H1 (cell line): ENCODE measurements at regions of chr13 and their contacts with region 1.

Region 1: DNA sequence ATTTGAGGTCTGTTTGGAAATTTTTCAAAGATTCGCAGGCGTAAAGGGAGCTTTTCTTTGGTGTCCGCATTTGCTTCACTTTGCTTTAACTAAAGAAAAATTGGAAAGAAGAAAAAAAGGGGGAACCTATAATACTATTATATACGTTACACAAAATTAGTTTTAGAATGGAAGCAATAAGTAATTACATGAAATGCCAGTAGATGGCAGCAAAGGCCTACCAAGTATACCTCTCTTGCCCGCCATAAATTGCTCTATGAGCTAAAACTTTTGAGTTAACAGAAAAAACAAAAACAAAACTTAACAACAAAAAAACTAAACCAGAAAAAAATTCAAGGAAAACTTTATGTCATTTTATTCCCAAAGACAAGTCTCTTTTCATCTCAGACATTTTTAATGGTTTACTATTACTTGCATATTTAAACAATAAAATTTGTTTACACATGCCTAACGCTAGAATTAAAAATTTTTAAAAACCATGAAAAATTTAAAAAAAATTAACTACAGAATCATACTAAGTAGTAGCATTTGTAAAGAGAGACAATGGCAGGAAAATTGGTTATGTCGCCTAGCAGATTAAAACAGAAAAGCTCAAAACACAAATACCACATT is 271.4 kb downstream of the NALCN start:
- DNase-seq: no peak
- H3K4me3 ChIP-seq: no peak overlapping the region
- H3K27ac ChIP-seq: no peak overlapping the region
- H3K4me1 ChIP-seq: peaks cover 0 to 3% (median 0%) of the 10 kb centered on the region in 4 experiments; a peak in 1 of 7 replicates
- H3K27me3 ChIP-seq: no peaks in the 10 kb centered on the region
- CTCF ChIP-seq: peak in 2 of 3 experiments; percentile 31 to 48; a peak in 2 of 4 replicates
- EP300 ChIP-seq: no peak
- POLR2A ChIP-seq: no peak
- RAD21 ChIP-seq: peak; percentile 82 to 84

Region 2: DNA sequence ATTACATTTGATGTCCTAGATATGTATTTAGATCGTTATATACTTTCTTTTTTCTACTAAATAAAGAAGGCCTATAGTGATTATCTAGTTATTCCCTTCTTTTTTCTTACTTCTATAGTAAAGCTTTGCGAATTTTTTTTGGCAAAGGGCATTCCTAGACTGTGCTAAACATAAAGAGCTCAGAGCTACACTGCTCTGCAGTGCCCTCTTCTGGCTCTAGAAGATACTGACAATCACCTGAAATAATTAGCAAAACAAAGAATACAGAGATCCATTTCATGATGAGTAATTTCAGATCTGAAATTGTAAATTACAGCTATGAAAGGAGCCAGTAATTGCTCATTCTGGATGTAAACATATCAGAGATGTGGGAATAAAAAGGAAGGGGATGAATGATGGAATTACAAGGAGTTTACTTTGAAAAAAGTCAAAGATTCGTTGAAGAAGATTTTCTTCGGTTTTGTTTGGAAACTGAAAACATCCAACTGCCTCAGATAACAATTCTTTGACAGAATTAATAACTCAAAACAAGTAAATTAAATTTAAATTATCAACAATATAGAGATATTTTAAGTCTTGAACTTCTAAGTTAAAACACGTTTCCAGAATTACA is 17.1 kb before region 1 on chr13:
- CTCF ChIA-PET with region 1: interaction called, 14 read pairs
- POLR2A ChIA-PET with region 1: no interaction called
- DNase-seq: no peak
- H3K4me3 ChIP-seq: no peak overlapping the region
- H3K27ac ChIP-seq: no peak overlapping the region
- H3K4me1 ChIP-seq: no peaks in the 10 kb centered on the region
- H3K27me3 ChIP-seq: no peaks in the 10 kb centered on the region
- CTCF ChIP-seq: peak in 2 of 3 experiments; percentile 53 to 67; a peak in 2 of 4 replicates
- EP300 ChIP-seq: no peak
- POLR2A ChIP-seq: no peak
- RAD21 ChIP-seq: peak; percentile 71 to 74

Region 3: DNA sequence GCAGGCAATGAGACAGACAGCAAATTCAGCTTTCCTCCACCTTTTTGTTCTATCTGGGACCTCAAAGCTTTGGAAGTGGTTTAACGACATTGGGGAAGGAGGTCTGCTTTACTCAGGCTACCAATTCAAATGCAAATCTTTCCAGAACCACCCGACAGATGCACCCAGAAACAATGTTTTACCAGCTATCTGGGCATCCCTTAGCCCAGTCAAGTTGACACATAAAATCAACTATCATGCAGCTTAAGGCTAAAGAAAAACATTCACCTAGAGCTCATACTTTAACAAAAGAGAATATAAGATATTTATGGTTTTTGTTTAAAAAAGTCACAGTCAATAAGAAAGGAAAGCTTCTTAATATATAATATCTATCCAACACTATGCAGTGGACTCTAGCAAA is 25.4 kb after region 1 on chr13:
- CTCF ChIA-PET with region 1: interaction called, 17 read pairs
- POLR2A ChIA-PET with region 1: no interaction called
- DNase-seq: no peak
- H3K4me3 ChIP-seq: no peak overlapping the region
- H3K27ac ChIP-seq: no peak overlapping the region
- H3K4me1 ChIP-seq: no peaks in the 10 kb centered on the region
- H3K27me3 ChIP-seq: no peaks in the 10 kb centered on the region
- CTCF ChIP-seq: no peak
- EP300 ChIP-seq: no peak
- POLR2A ChIP-seq: no peak
- RAD21 ChIP-seq: no peak

Region 4: DNA sequence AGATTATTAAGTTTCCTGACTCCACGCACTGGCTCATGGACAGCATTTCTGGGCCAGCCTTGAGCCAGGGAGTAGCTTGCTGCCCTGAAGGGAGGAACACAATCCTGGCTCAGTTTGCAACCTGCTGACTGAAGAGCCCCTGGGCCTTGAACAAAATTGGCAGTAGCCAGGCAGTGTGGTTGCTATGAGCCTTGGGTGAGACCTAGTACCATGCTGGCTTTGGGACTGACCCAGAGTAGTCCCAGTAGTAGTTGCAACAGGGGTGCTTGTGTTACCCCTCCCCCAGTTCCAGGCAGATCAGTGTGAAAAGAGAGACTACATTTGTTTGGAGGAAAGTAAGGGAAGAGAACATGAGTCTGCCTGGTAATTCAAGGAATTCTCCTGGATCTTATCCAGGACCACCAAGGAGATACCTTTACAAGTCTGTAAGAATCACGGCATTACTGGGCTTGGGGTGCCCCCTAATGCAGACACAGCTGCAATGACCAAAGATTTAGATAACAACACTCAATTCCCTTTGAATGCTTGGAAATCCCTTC is 329.6 kb after region 1 on chr13:
- CTCF ChIA-PET with region 1: interaction called, 206 read pairs
- POLR2A ChIA-PET with region 1: interaction called, 4 read pairs
- DNase-seq: peak in 1 of 2 experiments; percentile 61
- H3K4me3 ChIP-seq: no peak overlapping the region
- H3K27ac ChIP-seq: peak overlapping the region; percentile 16; the same call in 1 of the 2 replicates
- H3K4me1 ChIP-seq: peaks cover 0 to 4% (median 0%) of the 10 kb centered on the region in 4 experiments; a peak in 4 of 7 replicates
- H3K27me3 ChIP-seq: no peaks in the 10 kb centered on the region
- CTCF ChIP-seq: peak in 2 of 3 experiments; percentile 74 to 78; a peak in 3 of 4 replicates
- EP300 ChIP-seq: no peak
- POLR2A ChIP-seq: no peak
- RAD21 ChIP-seq: peak; percentile 95 to 96

Region 5: DNA sequence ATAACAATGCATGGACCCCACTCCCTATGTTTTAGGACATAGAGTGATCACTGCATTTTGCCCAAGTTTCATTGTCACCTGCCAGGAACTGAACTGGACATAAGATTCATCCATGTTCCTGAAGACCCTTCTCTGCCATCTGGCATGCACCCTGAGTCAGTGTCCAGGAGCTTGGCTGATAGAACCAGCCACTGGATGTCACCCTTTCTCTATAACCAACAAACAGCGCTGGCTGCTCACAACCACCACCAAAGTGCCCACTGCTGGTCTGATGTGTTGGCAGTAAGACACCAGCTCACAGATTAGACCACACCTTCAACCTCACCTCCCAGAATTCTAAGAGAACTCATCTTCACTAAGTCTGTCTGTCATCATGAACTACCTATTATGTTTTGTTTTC is 640.9 kb after region 1 on chr13:
- CTCF ChIA-PET with region 1: interaction called, 12 read pairs
- POLR2A ChIA-PET with region 1: no interaction called
- DNase-seq: peak; percentile 33 to 47
- H3K4me3 ChIP-seq: no peak overlapping the region
- H3K27ac ChIP-seq: no peak overlapping the region
- H3K4me1 ChIP-seq: no peaks in the 10 kb centered on the region; a peak in 1 of 7 replicates
- H3K27me3 ChIP-seq: no peaks in the 10 kb centered on the region
- CTCF ChIP-seq: peak; percentile 55 to 94 (median 85)
- EP300 ChIP-seq: no peak
- POLR2A ChIP-seq: no peak
- RAD21 ChIP-seq: peak; percentile 92 to 95

Region 6: GRCh38 chr13:101942038-101942437 is 797.1 kb after region 1 on chr13:
- CTCF ChIA-PET with region 1: interaction called, 11 read pairs
- POLR2A ChIA-PET with region 1: no interaction called
- DNase-seq: no peak
- H3K4me3 ChIP-seq: no peak overlapping the region
- H3K27ac ChIP-seq: no peak overlapping the region
- H3K4me1 ChIP-seq: no peaks in the 10 kb centered on the region
- H3K27me3 ChIP-seq: no peaks in the 10 kb centered on the region
- CTCF ChIP-seq: peak in 2 of 3 experiments; percentile 77 to 88; a peak in 3 of 4 replicates
- EP300 ChIP-seq: no peak
- POLR2A ChIP-seq: no peak
- RAD21 ChIP-seq: peak; percentile 94